ENCODE measurements at regions of chr2 and their contacts with region 1.

Region 1: GRCh38 chr2:43293744-43294695 is 67.6 kb upstream of the ZFP36L2 start:
- DNase-seq: peak; percentile 49
- ATAC-seq: peak; percentile 98
- H3K4me3 Mint-ChIP-seq: peak overlapping the region; percentile 1
- H3K27ac Mint-ChIP-seq: peak overlapping the region; percentile 96
- H3K4me1 Mint-ChIP-seq: peaks cover 21% of the 10 kb centered on the region
- H3K27me3 Mint-ChIP-seq: no peaks in the 10 kb centered on the region

Region 2: GRCh38 chr2:43169987-43170386 is 124.0 kb before region 1 on chr2:
- CTCF ChIA-PET with region 1: no interaction called
- POLR2A ChIA-PET with region 1: no interaction called
- intact Hi-C with region 1: loop called in 1 of 2 experiments (anchors 1 kb)
- DNase-seq: peak; percentile 85
- ATAC-seq: peak; percentile 27
- H3K4me3 Mint-ChIP-seq: peak overlapping the region; percentile 24
- H3K27ac Mint-ChIP-seq: peak overlapping the region; percentile 91
- H3K4me1 Mint-ChIP-seq: peaks cover 79% of the 10 kb centered on the region
- H3K27me3 Mint-ChIP-seq: no peaks in the 10 kb centered on the region

Region 3: DNA sequence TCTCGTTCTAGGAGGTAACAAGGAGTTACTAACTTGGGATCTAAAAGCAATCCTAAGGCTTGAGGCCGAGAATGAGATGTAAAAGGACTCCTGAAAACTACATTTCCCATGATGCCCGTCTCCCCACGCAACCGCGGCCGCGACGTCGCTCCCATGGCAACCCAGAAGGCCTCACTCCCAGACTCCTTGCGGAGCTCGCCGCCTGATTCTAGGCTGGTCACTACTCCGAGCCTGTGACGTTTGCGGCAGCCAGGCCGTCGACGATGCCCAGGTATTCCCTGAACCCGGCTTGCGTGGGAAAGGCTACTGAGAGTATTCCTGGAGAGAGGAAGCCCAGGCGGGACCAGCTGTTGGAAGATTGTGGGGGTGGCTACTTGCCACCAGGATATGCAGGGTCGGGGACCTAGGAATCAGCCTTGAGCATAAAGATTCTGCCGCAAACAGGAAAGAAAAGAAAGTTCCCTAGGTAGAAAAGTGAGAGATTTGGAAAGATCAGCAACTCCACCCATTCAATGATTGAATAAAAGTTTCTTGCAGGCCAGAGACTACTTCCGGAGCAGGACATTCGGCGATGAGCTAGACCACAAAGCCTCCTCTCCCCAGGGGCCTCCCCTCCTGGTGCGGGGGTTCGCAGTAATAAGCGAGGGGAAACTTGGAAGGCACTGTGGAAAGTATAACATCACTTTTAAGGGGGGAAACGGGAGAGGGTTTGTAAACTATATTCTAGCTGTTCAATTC is 480.0 kb after region 1 on chr2 and contains the start of gene DYNC2LI1:
- CTCF ChIA-PET with region 1: no interaction called
- POLR2A ChIA-PET with region 1: no interaction called
- intact Hi-C with region 1: no loop called
- DNase-seq: peak; percentile 92
- ATAC-seq: peak; percentile 94
- H3K4me3 Mint-ChIP-seq: peak within 1 kb of the TSS; percentile 95
- H3K27ac Mint-ChIP-seq: peak within 1 kb of the TSS; percentile 74
- H3K4me1 Mint-ChIP-seq: peaks cover 29% of the 10 kb centered on the region
- H3K27me3 Mint-ChIP-seq: no peaks in the 10 kb centered on the region
- total RNA-seq, gene DYNC2LI1: 19.5 to 28.4 TPM